ENCODE measurements at regions of chr13 and their contacts with region 1.

Region 1: GRCh38 chr13:25286969-25287961 is at the start of gene MTMR6:
- DNase-seq: peak; percentile 82
- ATAC-seq: peak; percentile 94
- H3K4me3 ChIP-seq: peak within 1 kb of the TSS; percentile 94
- H3K27ac ChIP-seq: peak within 1 kb of the TSS; percentile 35
- H3K4me1 ChIP-seq: peaks cover 9% of the 10 kb centered on the region
- H3K27me3 ChIP-seq: no peaks in the 10 kb centered on the region
- CTCF ChIP-seq: peak; percentile 87
- total RNA-seq, gene MTMR6: 10.5 and 11.6 TPM in 2 replicates

Region 2: GRCh38 chr13:25085125-25085742 is 202.0 kb before region 1 on chr13:
- CTCF ChIA-PET with region 1: no interaction called
- POLR2A ChIA-PET with region 1: no interaction called
- intact Hi-C with region 1: loop called (anchors 1 kb)
- DNase-seq: peak; percentile 63
- ATAC-seq: peak; percentile 83
- H3K4me3 ChIP-seq: no peak overlapping the region
- H3K27ac ChIP-seq: no peak overlapping the region
- H3K4me1 ChIP-seq: no peaks in the 10 kb centered on the region
- H3K27me3 ChIP-seq: peaks cover 27% of the 10 kb centered on the region
- CTCF ChIP-seq: peak; percentile 78

Region 3: GRCh38 chr13:25232937-25233515 is 54.2 kb before region 1 on chr13:
- CTCF ChIA-PET with region 1: no interaction called
- POLR2A ChIA-PET with region 1: no interaction called
- intact Hi-C with region 1: loop called (anchors 1 kb)
- DNase-seq: peak; percentile 65
- ATAC-seq: peak; percentile 73
- H3K4me3 ChIP-seq: no peak overlapping the region
- H3K27ac ChIP-seq: no peak overlapping the region
- H3K4me1 ChIP-seq: no peaks in the 10 kb centered on the region
- H3K27me3 ChIP-seq: peaks cover 14% of the 10 kb centered on the region; the same call in 1 of the 2 replicates
- CTCF ChIP-seq: peak; percentile 69

Region 4: DNA sequence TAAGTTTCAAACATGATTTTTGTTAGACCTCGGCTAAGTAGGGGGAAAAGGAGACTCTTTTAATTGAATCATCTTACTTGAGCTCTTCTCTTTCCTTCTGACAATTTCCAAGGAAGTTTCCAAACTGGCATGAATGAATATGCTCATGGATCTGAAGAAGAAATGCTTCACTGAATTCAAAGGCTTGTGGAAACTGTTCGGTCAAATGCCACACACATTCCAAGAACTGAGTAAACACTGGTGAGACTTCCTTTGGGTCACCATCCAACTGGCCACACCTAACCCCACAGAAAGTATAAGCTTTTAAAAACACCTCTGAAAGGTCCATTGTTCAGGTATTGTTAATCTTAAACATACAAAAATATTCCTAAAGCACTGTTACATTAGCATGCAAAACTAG is 33.6 kb before region 1 on chr13:
- CTCF ChIA-PET with region 1: no interaction called
- POLR2A ChIA-PET with region 1: no interaction called
- intact Hi-C with region 1: loop called (anchors 5 kb)
- DNase-seq: peak; percentile 77
- ATAC-seq: peak; percentile 94
- H3K4me3 ChIP-seq: peak overlapping the region; percentile 34; the same call in 1 of the 2 replicates
- H3K27ac ChIP-seq: peak overlapping the region; percentile 78
- H3K4me1 ChIP-seq: peaks cover 21% of the 10 kb centered on the region
- H3K27me3 ChIP-seq: no peaks in the 10 kb centered on the region
- CTCF ChIP-seq: no peak

Region 5: GRCh38 chr13:25365720-25366235 is 78.5 kb after region 1 on chr13:
- CTCF ChIA-PET with region 1: no interaction called
- POLR2A ChIA-PET with region 1: no interaction called
- intact Hi-C with region 1: no loop called
- DNase-seq: no peak
- ATAC-seq: no peak
- H3K4me3 ChIP-seq: no peak overlapping the region
- H3K27ac ChIP-seq: no peak overlapping the region
- H3K4me1 ChIP-seq: no peaks in the 10 kb centered on the region
- H3K27me3 ChIP-seq: peaks cover 25% of the 10 kb centered on the region
- CTCF ChIP-seq: no peak

Measured in PC-3 (cell line).